CD4-positive, alpha-beta T cell (primary cell): ENCODE measurements at regions of chr6 and their contacts with region 1.

Region 1: DNA sequence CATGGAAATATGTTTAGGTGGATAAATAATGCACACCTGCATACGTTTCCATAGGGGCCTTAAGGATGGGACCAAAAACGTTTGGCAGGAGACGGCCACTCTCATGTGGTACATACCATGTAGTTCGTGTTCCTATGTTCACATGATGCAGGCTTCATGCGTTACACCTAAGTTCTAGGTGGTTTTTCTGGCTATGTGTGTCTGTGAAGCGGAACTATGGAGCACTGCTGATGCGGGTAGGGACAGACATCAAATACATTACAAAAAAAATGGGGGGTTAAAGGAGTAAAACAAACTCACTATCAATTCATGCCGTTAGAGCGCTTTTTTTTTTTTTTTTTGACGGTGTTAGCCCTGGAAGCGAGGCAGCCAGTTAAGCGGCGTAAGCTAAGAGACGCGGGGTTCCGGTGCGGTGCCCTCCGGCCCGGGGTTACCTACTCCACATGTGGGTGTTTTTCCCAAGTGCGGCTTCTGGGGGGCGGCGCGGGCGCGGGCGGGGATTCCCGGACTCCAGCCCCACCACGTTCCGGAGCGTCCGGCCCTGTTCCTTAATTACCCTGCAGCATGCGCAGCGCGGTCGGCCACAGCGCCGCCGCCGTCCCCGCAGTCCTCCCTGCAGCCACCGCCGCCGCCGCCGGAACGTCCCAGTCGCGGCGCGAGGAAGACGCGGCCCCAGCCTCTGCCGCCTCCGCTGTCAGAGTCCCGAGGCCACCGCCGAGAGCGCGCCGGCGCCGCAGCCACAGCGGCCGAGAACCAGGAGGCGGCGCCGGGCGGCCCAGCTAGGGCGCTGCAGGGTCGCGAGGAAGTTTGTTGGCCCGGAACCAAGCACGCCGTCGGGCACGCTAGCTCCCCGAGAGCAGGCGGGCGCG is 648 bp downstream of the COL19A1 start:
- DNase-seq: peak; percentile 15 to 81 (median 56)
- ATAC-seq: peak; percentile 77
- H3K4me3 ChIP-seq: peak overlapping the region; percentile 61
- H3K4me3 Mint-ChIP-seq: peak overlapping the region; percentile 89
- H3K27ac ChIP-seq: no peak overlapping the region
- H3K27ac Mint-ChIP-seq: no peak overlapping the region
- H3K4me1 ChIP-seq: peaks cover 13% of the 10 kb centered on the region
- H3K4me1 Mint-ChIP-seq: peaks cover 13% of the 10 kb centered on the region
- H3K27me3 ChIP-seq: no peaks in the 10 kb centered on the region
- H3K27me3 Mint-ChIP-seq: peaks cover 64% of the 10 kb centered on the region
- CTCF ChIP-seq: no peak

Region 2: DNA sequence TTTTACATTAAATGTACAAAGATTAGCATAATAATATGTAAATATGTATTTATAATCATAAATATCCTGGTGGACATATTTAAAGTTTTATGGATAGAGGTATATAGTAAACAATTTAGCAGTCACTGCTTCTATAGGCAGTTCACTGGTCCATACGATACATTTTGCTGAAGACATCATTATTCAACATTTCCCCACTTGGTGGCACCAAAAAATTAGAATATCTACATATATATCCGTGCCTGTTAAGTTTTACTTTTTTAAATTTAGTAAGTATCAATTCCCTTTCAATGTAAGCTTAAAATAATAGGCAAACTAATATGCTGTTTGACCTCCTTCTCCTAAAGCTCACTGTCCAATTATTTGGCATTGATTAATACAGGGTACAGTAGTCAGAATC is 134.4 kb before region 1 on chr6:
- CTCF ChIA-PET with region 1: no interaction called
- POLR2A ChIA-PET with region 1: no interaction called
- intact Hi-C with region 1: loop called (anchors 5 to 10 kb)
- DNase-seq: peak in 3 of 14 experiments; percentile 23 to 33 (median 29)
- ATAC-seq: no peak
- H3K4me3 ChIP-seq: no peak overlapping the region
- H3K4me3 Mint-ChIP-seq: no peak overlapping the region
- H3K27ac ChIP-seq: no peak overlapping the region
- H3K27ac Mint-ChIP-seq: no peak overlapping the region
- H3K4me1 ChIP-seq: no peaks in the 10 kb centered on the region
- H3K4me1 Mint-ChIP-seq: peaks cover 10% of the 10 kb centered on the region
- H3K27me3 ChIP-seq: no peaks in the 10 kb centered on the region
- H3K27me3 Mint-ChIP-seq: no peaks in the 10 kb centered on the region
- CTCF ChIP-seq: no peak

Region 3: GRCh38 chr6:69835414-69836179 is 31.4 kb before region 1 on chr6:
- CTCF ChIA-PET with region 1: no interaction called
- POLR2A ChIA-PET with region 1: no interaction called
- intact Hi-C with region 1: no loop called
- DNase-seq: peak in 4 of 14 experiments; percentile 24 to 67 (median 57)
- ATAC-seq: peak; percentile 77
- H3K4me3 ChIP-seq: no peak overlapping the region
- H3K4me3 Mint-ChIP-seq: no peak overlapping the region
- H3K27ac ChIP-seq: no peak overlapping the region
- H3K27ac Mint-ChIP-seq: no peak overlapping the region
- H3K4me1 ChIP-seq: no peaks in the 10 kb centered on the region
- H3K4me1 Mint-ChIP-seq: peaks cover 7% of the 10 kb centered on the region
- H3K27me3 ChIP-seq: peaks cover 4 to 11% of the 10 kb centered on the region in 2 experiments
- H3K27me3 Mint-ChIP-seq: peaks cover 29% of the 10 kb centered on the region
- CTCF ChIP-seq: peak; percentile 88